ENCODE measurements at regions of chr11 and their contacts with region 1.

Region 1: DNA sequence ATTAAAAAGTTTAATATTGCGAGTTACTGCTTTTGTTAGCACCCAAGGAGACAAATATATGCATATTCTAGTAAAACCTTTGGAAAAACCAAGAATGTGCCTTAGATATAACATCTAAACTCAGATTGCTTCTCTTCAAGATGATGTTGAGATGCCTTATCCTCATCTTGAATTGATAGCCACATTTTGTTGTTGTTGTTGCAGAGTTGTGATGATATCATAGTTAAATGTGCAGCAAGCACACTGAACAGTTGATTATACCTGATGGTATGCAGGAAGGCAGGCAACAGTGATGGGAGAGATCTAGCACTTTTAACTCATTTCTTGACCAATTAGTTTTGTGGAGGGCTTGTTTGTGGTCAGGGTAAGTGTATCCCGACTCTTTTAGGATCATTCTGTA is 48.0 kb downstream of the KDM2A start:
- DNase-seq: no peak
- ATAC-seq: no peak
- H3K4me3 ChIP-seq: no peak overlapping the region
- H3K27ac ChIP-seq: no peak overlapping the region
- H3K4me1 ChIP-seq: peaks cover 9 to 20% of the 10 kb centered on the region in 2 experiments; a peak in 4 of 5 replicates
- H3K27me3 ChIP-seq: no peaks in the 10 kb centered on the region
- CTCF ChIP-seq: no peak
- EP300 ChIP-seq: no peak
- POLR2A ChIP-seq: no peak
- RAD21 ChIP-seq: no peak

Region 2: DNA sequence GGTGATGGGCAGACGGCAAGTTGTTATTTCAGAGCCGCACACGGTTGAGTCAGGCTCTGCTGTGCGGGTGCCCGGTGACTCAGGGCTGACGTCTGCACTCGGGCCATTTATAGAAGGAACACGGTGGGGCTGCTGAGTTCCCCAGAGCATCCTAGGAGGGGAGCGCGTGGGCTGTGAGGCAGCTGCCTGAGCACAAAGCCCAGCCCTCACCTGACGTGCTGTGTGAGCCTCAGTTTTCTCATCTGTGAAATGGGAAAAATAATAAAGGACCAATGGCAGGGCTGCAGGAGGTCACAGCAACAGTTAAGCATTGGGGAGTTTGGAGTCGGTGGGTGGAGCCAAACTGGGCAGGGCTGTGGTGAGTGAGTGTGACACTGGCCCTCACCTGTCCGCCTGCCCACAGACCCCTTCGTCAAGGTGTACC is 121.7 kb before region 1 on chr11:
- CTCF ChIA-PET with region 1: no interaction called
- POLR2A ChIA-PET with region 1: no interaction called
- in situ Hi-C with region 1: no loop called
- intact Hi-C with region 1: no loop called
- DNase-seq: peak in 1 of 4 experiments; percentile 51
- ATAC-seq: peak; percentile 50
- H3K4me3 ChIP-seq: no peak overlapping the region
- H3K27ac ChIP-seq: no peak overlapping the region
- H3K4me1 ChIP-seq: peaks cover 0 to 26% of the 10 kb centered on the region in 2 experiments; a peak in 2 of 5 replicates
- H3K27me3 ChIP-seq: peaks cover 12 to 42% of the 10 kb centered on the region in 2 experiments; a peak in 4 of 5 replicates
- CTCF ChIP-seq: peak in 1 of 3 experiments; percentile 8; a peak in 1 of 6 replicates
- EP300 ChIP-seq: no peak
- POLR2A ChIP-seq: no peak
- RAD21 ChIP-seq: no peak

Region 3: DNA sequence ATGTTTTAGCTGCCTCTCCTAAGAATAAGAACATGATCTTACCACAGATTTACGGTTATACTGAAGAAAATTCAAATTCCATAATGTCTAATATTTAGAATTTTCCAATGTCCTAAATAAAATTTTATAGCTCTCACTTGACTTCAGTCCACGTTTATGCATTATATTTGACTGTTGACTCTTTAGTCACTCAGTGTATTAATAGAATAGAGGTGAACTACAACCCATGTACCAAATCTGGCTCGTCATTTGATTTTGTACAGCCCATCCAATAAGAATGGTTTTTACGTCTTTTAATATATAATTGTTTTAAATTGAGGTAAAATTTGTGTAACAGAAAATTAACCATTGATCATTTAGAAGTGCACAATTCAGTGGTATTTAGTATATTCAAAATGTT is 13.1 kb before region 1 on chr11:
- CTCF ChIA-PET with region 1: no interaction called
- POLR2A ChIA-PET with region 1: interaction called, 10 read pairs
- in situ Hi-C with region 1: no loop called
- intact Hi-C with region 1: no loop called
- DNase-seq: no peak
- ATAC-seq: no peak
- H3K4me3 ChIP-seq: no peak overlapping the region
- H3K27ac ChIP-seq: no peak overlapping the region
- H3K4me1 ChIP-seq: no peaks in the 10 kb centered on the region
- H3K27me3 ChIP-seq: no peaks in the 10 kb centered on the region
- CTCF ChIP-seq: no peak
- EP300 ChIP-seq: no peak
- POLR2A ChIP-seq: no peak
- RAD21 ChIP-seq: no peak

Region 4: GRCh38 chr11:67439321-67439883 is 272.3 kb after region 1 on chr11:
- CTCF ChIA-PET with region 1: no interaction called
- POLR2A ChIA-PET with region 1: no interaction called
- in situ Hi-C with region 1: no loop called
- intact Hi-C with region 1: no loop called
- DNase-seq: no peak
- ATAC-seq: no peak
- H3K4me3 ChIP-seq: no peak overlapping the region
- H3K27ac ChIP-seq: 0 out of 3 replicates have a peak overlapping the region, but pooled peaks have one; percentile 28
- H3K4me1 ChIP-seq: peaks cover 16 to 91% of the 10 kb centered on the region in 2 experiments
- H3K27me3 ChIP-seq: no peaks in the 10 kb centered on the region
- CTCF ChIP-seq: peak in 2 of 3 experiments; percentile 39 to 43; a peak in 3 of 6 replicates
- EP300 ChIP-seq: no peak
- POLR2A ChIP-seq: peak; percentile 15; the same call in 1 of the 2 replicates
- RAD21 ChIP-seq: peak in 1 of 2 experiments; percentile 31; a peak in 1 of 4 replicates

Region 5: DNA sequence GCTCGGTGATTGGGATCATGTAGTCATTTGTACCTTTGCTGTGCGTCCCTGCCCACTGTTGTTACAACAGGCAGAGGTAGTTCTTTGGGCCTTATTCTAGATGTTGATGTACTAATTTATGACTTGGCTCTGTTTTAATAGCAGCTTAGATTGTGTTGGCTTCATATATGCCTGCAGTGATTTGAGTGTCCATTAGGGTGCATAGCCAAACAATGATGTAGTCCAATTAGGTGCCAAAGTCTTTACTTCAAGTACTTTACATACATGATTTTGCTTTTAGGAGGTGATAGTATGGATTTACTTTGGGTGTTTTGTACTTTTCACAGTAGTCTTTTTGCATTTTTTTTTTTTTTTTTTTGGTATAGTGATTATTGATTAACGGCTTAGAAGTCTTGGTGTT is 1339.8 kb after region 1 on chr11:
- CTCF ChIA-PET with region 1: no interaction called
- POLR2A ChIA-PET with region 1: no interaction called
- in situ Hi-C with region 1: no loop called
- intact Hi-C with region 1: no loop called
- DNase-seq: no peak
- ATAC-seq: no peak
- H3K4me3 ChIP-seq: no peak overlapping the region
- H3K27ac ChIP-seq: no peak overlapping the region
- H3K4me1 ChIP-seq: peaks cover 0 to 31% of the 10 kb centered on the region in 2 experiments
- H3K27me3 ChIP-seq: no peaks in the 10 kb centered on the region
- CTCF ChIP-seq: no peak
- EP300 ChIP-seq: no peak
- POLR2A ChIP-seq: no peak
- RAD21 ChIP-seq: no peak

Measured in K562 (cell line).